ENCODE measurements at regions of chr16 and their contacts with region 1.

Region 1: GRCh38 chr16:31073968-31074813 is at the starts of genes ZNF646 and ZNF668:
- DNase-seq: peak; percentile 99
- H3K4me3 Mint-ChIP-seq: peak within 1 kb of the TSS; percentile 97
- H3K27ac Mint-ChIP-seq: peak within 1 kb of the TSS; percentile 94
- H3K4me1 Mint-ChIP-seq: peaks cover 39% of the 10 kb centered on the region
- H3K27me3 Mint-ChIP-seq: no peaks in the 10 kb centered on the region
- total RNA-seq, gene ZNF646: 31.9 to 32.1 TPM
- total RNA-seq, gene ZNF668: 13.9 to 17.4 TPM

Region 2: DNA sequence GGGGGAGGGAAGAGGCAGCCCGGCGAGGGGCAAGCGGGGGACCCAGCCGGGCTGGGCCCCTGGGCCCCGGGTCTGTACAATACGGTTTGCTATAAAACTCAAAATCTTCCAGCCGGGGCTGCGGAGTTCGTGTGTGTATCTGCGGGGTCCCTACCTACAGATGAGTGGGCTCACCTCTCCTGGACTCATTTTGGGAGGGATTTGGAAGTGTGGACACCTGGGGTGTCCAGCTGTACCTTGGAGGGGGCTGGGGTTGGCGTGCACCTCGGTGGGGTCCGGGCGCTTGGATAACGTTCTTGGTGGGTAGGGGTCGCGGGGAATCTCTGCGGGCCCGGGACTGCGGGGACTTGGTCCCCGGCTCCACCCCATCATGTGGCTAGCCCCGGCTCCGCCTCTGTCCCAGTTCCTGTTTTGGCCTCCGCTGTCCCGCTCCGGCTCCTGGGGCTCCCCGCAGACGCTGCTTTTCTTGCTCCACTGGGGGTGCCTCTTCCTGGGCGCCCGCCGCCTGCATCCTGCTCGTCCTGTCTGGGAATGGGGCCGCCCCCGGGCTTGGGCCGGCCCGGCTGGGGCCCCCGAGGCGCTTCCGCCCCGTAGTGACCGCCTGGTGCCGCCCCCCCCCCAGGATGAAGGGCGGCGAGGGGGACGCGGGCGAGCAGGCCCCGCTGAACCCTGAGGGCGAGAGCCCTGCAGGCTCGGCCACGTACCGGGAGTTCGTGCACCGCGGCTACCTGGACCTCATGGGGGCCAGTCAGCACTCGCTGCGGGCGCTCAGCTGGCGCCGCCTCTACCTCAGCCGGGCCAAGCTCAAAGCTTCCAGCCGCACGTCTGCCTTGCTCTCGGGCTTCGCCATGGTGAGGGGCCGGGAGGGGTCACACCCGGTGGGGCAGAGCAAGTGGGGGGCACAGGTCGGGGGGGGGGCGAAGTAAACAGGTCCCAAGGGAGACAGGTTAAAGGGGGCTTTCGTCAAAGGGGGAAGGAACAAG is 125.2 kb before region 1 on chr16 and contains the start of gene ORAI3:
- CTCF ChIA-PET with region 1: interaction called, 4 read pairs
- POLR2A ChIA-PET with region 1: interaction called, 15 read pairs
- DNase-seq: peak; percentile 62
- H3K4me3 Mint-ChIP-seq: peak within 1 kb of the TSS; percentile 83
- H3K27ac Mint-ChIP-seq: peak within 1 kb of the TSS; percentile 77
- H3K4me1 Mint-ChIP-seq: peaks cover 31% of the 10 kb centered on the region
- H3K27me3 Mint-ChIP-seq: no peaks in the 10 kb centered on the region
- total RNA-seq, gene ORAI3: 30.3 to 33.6 TPM

Region 3: GRCh38 chr16:30984669-30985400 is 89.4 kb before region 1 on chr16 and contains the start of gene HSD3B7:
- CTCF ChIA-PET with region 1: interaction called, 11 read pairs
- POLR2A ChIA-PET with region 1: interaction called, 9 read pairs
- DNase-seq: peak; percentile 85
- H3K4me3 Mint-ChIP-seq: peak within 1 kb of the TSS; percentile 39
- H3K27ac Mint-ChIP-seq: no peak within 1 kb of the TSS
- H3K4me1 Mint-ChIP-seq: peaks cover 14% of the 10 kb centered on the region
- H3K27me3 Mint-ChIP-seq: no peaks in the 10 kb centered on the region
- total RNA-seq, gene HSD3B7: 7.1 to 7.5 TPM

Region 4: DNA sequence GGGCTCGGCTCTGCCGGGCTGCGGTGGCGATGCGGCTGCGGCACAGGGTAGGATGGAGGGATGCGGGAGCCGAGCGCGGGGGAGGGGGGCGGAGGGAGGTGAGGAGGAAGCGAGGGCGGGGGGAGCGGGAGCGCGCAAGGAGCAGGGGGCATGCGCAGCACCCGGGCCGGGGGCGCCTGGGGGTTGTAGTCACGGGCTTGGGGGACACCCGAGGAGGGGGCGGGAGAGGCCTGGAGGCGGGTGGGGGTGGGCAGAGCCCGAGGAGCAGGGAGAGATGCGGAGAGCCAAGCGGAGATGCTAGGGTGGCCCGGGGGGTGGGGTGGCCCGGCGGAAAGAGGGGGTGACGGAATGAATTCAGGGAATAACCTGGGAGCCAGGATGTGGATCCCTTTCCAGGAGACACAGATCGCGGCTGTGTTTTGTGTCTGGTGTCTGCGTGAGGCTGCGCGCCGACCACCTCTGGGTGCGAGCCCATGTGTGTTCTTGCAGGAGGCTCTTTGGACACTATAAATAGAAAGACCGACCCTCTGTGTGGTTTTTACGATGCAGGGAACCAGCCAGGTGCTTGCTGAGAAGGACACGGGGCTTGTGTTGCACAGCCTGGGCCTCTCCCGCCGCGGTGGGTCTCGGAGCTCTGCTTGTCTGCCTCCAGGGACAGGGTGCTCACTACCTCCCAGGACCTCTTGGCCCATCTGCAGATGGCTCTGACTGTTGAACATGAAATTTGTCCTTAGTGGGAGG is 63.4 kb before region 1 on chr16 and contains the start of gene STX1B:
- CTCF ChIA-PET with region 1: no interaction called
- POLR2A ChIA-PET with region 1: no interaction called
- DNase-seq: peak; percentile 31
- H3K4me3 Mint-ChIP-seq: peak within 1 kb of the TSS; percentile 14
- H3K27ac Mint-ChIP-seq: no peak within 1 kb of the TSS
- H3K4me1 Mint-ChIP-seq: peaks cover 4% of the 10 kb centered on the region
- H3K27me3 Mint-ChIP-seq: peaks cover 59% of the 10 kb centered on the region
- total RNA-seq, gene STX1B: 1.5 to 1.7 TPM

Region 5: GRCh38 chr16:31032736-31033708 is 41.2 kb before region 1 on chr16 and contains the start of gene STX4:
- CTCF ChIA-PET with region 1: no interaction called
- POLR2A ChIA-PET with region 1: interaction called, 29 read pairs
- DNase-seq: peak; percentile 98
- H3K4me3 Mint-ChIP-seq: peak within 1 kb of the TSS; percentile 86
- H3K27ac Mint-ChIP-seq: peak within 1 kb of the TSS; percentile 79
- H3K4me1 Mint-ChIP-seq: peaks cover 28% of the 10 kb centered on the region
- H3K27me3 Mint-ChIP-seq: no peaks in the 10 kb centered on the region
- total RNA-seq, gene STX4: 67.2 to 70.0 TPM

Region 6: DNA sequence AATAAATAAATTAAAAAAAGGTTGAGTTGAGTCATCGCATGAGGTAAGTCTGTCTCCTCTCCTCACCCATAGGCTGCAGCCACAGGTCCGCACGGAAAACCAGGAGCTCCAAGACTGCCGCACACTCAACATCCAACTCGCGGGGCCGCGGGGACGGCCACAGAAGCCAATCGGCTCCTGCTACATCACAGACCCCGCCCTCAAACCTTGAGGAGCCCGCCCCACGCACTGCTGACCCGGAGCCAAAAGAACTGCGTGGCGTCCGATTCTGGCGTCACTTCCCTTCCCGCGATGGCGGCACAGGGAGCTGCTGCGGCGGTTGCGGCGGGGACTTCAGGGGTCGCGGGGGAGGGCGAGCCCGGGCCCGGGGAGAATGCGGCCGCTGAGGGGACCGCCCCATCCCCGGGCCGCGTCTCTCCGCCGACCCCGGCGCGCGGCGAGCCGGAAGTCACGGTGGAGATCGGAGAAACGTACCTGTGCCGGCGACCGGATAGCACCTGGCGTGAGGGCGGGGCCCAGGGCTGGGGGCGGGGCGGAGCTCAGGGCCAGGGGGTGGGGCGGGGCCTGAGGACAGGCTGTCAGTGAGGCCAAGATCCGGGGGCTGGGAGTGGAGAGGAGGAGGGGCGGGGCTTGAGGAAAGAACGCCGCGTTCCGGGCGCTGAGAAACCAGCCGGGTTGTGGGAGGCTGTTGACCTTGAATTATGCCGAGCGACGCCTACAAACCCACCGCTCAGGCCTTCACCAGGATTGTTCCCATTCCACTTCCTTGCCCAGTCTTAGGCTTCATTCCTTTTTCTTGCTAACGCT is 43.4 kb after region 1 on chr16 and contains the start of gene KAT8:
- CTCF ChIA-PET with region 1: interaction called, 5 read pairs
- POLR2A ChIA-PET with region 1: interaction called, 43 read pairs
- DNase-seq: peak; percentile 98
- H3K4me3 Mint-ChIP-seq: peak within 1 kb of the TSS; percentile 73
- H3K27ac Mint-ChIP-seq: peak within 1 kb of the TSS; percentile 78
- H3K4me1 Mint-ChIP-seq: peaks cover 32% of the 10 kb centered on the region
- H3K27me3 Mint-ChIP-seq: no peaks in the 10 kb centered on the region
- total RNA-seq, gene KAT8: 43.7 to 44.3 TPM

Region 7: DNA sequence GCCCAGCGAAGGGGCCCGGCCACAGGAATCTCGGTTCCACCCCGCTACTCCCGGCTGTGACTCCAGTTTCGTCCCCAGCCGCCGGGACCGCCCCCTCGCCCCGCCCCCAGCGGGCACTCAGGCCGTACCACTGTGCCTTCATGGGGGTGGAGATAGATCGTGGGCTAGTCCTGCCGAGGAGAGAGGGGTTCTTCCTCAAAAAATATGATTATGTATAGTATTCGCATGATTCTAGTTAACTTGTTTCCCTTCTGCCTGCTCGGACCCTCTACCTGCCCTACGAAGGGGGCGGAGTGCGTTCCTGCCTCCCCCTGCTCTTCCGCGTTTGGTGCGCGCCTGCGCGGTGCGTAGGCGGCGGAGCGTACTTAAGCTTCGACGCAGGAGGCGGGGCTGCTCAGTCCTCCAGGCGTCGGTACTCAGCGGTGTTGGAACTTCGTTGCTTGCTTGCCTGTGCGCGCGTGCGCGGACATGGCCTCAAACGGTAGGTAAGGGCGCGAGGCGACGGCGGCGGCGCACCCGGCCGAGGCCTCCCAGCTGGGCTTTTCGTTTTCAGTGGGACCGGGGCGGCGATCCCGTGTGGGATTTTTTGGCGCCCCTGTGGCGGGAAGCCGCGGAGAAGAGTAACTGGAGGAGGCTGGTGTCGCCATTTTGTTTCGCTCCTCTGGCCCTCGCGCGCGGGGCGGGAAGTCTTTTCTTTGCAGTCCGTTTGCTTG is 105.7 kb after region 1 on chr16 and contains the start of gene FUS:
- CTCF ChIA-PET with region 1: no interaction called
- POLR2A ChIA-PET with region 1: interaction called, 21 read pairs
- DNase-seq: peak; percentile 91
- H3K4me3 Mint-ChIP-seq: peak within 1 kb of the TSS; percentile 93
- H3K27ac Mint-ChIP-seq: peak within 1 kb of the TSS; percentile 98
- H3K4me1 Mint-ChIP-seq: peaks cover 53% of the 10 kb centered on the region
- H3K27me3 Mint-ChIP-seq: peaks cover 2% of the 10 kb centered on the region
- total RNA-seq, gene FUS: 386 to 397 TPM

Measured in activated CD4-positive, alpha-beta memory T cell treated with anti-CD3 and anti-CD28 coated beads, Interleukin-2, amount 10 ng/mL, durations not matched to agents 7 days and 5 days (primary cell).